ENCODE measurements at regions of chr5 and their contacts with region 1.

Region 1: GRCh38 chr5:16934123-16934522 is 2.0 kb downstream of the MYO10 start:
- DNase-seq: no peak
- ATAC-seq: no peak
- H3K4me3 ChIP-seq: peak overlapping the region; percentile 71 to 99 (median 80)
- H3K27ac ChIP-seq: no peak overlapping the region
- H3K4me1 ChIP-seq: peaks cover 0 to 10% of the 10 kb centered on the region in 2 donors
- H3K27me3 ChIP-seq: peaks cover 0 to 37% (median 28%) of the 10 kb centered on the region in 3 donors
- CTCF ChIP-seq: peak; percentile 10 to 73 (median 66)
- POLR2A ChIP-seq: no peak

Region 2: GRCh38 chr5:16465544-16466466 is 468.3 kb before region 1 on chr5 and contains the start of gene ZNF622:
- in situ Hi-C with region 1: no loop called
- intact Hi-C with region 1: loop called (anchors 10 kb)
- DNase-seq: peak; percentile 87 to 91
- ATAC-seq: peak; percentile 51 to 74
- H3K4me3 ChIP-seq: peak within 1 kb of the TSS; percentile 78 to 97 (median 92)
- H3K27ac ChIP-seq: peak within 1 kb of the TSS; percentile 87 to 94 (median 92)
- H3K4me1 ChIP-seq: peaks cover 84 to 85% of the 10 kb centered on the region in 2 donors
- H3K27me3 ChIP-seq: no peaks in the 10 kb centered on the region
- CTCF ChIP-seq: no peak
- POLR2A ChIP-seq: peak; percentile 92 to 96
- total RNA-seq, gene ZNF622: 44.8 to 150 (median 75.1) TPM

Region 3: GRCh38 chr5:16784843-16785791 is 149.0 kb before region 1 on chr5:
- in situ Hi-C with region 1: no loop called
- intact Hi-C with region 1: loop called (anchors 5 kb)
- DNase-seq: peak in 1 of 2 donors; percentile 63
- ATAC-seq: peak; percentile 90 to 93
- H3K4me3 ChIP-seq: no peak overlapping the region
- H3K27ac ChIP-seq: peak overlapping the region; percentile 71 to 86 (median 79)
- H3K4me1 ChIP-seq: peaks cover 13 to 19% of the 10 kb centered on the region in 2 donors
- H3K27me3 ChIP-seq: no peaks in the 10 kb centered on the region
- CTCF ChIP-seq: no peak
- POLR2A ChIP-seq: no peak

Region 4: GRCh38 chr5:16889203-16889971 is 44.7 kb before region 1 on chr5:
- in situ Hi-C with region 1: no loop called
- intact Hi-C with region 1: loop called (anchors 2 kb)
- DNase-seq: no peak
- ATAC-seq: no peak
- H3K4me3 ChIP-seq: no peak overlapping the region
- H3K27ac ChIP-seq: no peak overlapping the region
- H3K4me1 ChIP-seq: peaks cover 7 to 34% of the 10 kb centered on the region in 2 donors
- H3K27me3 ChIP-seq: no peaks in the 10 kb centered on the region
- CTCF ChIP-seq: no peak
- POLR2A ChIP-seq: no peak

Region 5: DNA sequence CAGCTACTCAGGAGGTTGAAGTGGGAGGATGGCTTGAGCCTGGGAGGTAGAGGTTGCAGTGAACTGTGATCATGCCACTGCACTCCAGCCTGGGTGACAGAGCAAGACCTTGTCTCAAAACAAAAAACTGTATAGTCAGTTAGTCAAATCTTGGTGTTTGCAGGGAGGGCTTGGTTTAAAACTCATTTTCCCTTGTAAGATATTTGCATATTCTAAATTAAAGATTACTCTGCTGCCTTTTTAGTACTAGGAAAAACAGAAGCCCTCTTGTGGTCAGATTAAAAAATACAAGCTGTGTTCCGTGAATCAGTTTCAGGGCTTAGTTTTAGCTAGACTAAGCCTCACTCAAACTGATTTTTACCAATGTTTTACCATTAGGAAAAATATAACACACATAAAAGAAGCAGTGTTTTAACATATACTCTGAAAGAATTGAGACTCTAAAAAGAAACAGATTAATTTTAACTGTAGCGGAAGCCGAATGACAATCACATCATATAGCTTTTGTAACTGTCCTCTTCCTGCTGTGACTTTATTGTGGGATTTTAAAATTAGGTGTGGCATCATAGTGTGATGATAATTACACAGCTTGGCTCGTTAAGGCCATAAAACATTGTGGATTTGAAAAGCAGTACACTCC is 198.4 kb after region 1 on chr5:
- in situ Hi-C with region 1: no loop called
- intact Hi-C with region 1: loop called (anchors 5 kb)
- DNase-seq: no peak
- ATAC-seq: no peak
- H3K4me3 ChIP-seq: no peak overlapping the region
- H3K27ac ChIP-seq: no peak overlapping the region
- H3K4me1 ChIP-seq: no peaks in the 10 kb centered on the region
- H3K27me3 ChIP-seq: no peaks in the 10 kb centered on the region
- CTCF ChIP-seq: peak; percentile 46 to 67 (median 59)
- POLR2A ChIP-seq: no peak

Measured in gastrocnemius medialis (tissue), 4 donors.